Activated CD4-positive, alpha-beta memory T cell treated with anti-CD3 and anti-CD28 coated beads, Interleukin-2, amount 10 ng/mL, durations not matched to agents 7 days and 5 days (primary cell): ENCODE measurements at regions of chr15 and their contacts with region 1.

Region 1: DNA sequence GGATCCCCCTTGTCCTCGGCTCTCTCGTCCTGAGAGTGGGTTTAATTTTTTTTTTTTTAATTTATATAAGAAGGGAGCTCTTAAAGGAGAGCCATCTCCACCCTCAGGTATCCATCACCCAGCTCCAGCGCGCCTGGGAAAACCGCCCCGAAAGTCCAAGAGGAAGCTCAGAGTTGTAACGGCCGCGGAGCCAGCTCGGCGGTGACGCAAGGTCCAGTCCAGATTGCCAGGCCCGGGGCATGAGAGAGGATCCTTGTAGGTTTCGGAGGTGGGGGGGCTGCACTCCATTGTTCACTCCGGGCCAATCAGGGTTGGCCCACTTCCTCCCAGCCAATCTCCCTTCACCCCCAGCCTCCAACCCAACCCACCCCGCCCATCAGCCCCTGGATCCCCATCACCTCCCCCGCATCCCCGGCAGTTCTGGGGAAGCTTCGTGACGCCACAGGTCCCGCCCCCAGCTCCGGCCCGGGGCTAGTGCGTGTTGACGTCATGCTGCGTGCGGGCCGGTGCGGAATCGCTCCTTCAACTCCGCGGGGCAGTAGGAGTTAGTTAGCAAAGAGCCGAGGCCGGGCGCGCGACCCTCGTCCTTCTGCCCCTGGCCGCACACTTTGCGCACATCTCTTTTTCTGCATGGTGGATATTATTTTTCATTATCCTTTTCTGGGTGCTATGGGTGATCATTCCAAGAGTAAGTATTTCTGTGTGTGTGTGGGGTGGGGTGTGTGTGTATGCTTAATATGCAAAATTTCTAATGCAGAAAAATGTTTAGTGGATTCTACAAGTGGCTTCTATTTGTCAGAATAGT is at the start of gene ISL2:
- DNase-seq: peak; percentile 92
- H3K4me3 Mint-ChIP-seq: peak within 1 kb of the TSS; percentile 83
- H3K27ac Mint-ChIP-seq: peak within 1 kb of the TSS; percentile 83
- H3K4me1 Mint-ChIP-seq: peaks cover 59% of the 10 kb centered on the region
- H3K27me3 Mint-ChIP-seq: peaks cover 50% of the 10 kb centered on the region
- total RNA-seq, gene ISL2: 3.7 TPM

Region 2: GRCh38 chr15:76311100-76311953 is 25.1 kb before region 1 on chr15 and contains the start of gene ETFA:
- CTCF ChIA-PET with region 1: interaction called, 10 read pairs
- POLR2A ChIA-PET with region 1: interaction called, 13 read pairs
- DNase-seq: peak; percentile 96
- H3K4me3 Mint-ChIP-seq: peak within 1 kb of the TSS; percentile 89
- H3K27ac Mint-ChIP-seq: peak within 1 kb of the TSS; percentile 76
- H3K4me1 Mint-ChIP-seq: peaks cover 26% of the 10 kb centered on the region
- H3K27me3 Mint-ChIP-seq: peaks cover 3% of the 10 kb centered on the region
- total RNA-seq, gene ETFA: 109 to 112 TPM